Activated CD4-positive, alpha-beta memory T cell treated with anti-CD3 and anti-CD28 coated beads, Interleukin-2, amount 10 ng/mL, durations not matched to agents 7 days and 5 days (primary cell): ENCODE measurements at regions of chr7 and their contacts with region 1.

Region 1: DNA sequence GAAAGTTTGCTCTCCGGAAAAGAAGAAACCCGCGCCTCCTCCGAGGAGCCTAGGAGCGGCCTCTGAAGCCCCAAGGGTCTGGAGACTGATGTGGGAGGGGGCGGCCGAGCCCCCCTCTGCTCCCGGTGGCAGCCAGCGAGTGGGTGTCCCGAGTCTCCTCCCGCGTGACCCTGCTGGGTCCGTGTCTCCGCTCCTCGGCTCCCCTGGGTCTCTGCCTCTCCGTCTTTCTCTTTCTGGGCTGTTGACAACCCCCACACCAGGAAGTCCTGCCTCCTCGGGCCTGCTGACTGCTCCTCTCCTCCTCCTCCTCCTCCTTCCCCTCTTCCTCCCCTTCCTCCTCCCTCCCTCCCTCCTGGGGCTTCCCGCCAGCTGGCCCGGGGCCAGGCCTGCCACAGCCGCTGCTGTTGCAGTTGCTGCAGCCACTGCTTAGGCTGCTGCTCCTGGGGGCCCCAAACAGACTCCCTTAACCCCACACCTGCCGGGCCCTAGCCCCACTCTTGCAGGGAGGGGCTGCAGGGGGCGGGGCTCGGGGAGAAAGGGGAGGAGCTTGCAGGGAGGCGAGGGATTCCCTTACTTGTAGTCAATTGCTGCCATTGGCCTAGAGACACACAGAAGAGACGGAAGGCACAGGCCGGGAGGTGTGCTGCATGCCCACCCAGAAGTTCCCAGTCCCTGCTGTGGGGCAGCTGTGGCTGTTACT is at the start of gene TSC22D4:
- DNase-seq: peak; percentile 91
- H3K4me3 Mint-ChIP-seq: peak within 1 kb of the TSS; percentile 99
- H3K27ac Mint-ChIP-seq: peak within 1 kb of the TSS; percentile 93
- H3K4me1 Mint-ChIP-seq: peaks cover 40% of the 10 kb centered on the region
- H3K27me3 Mint-ChIP-seq: no peaks in the 10 kb centered on the region
- total RNA-seq, gene TSC22D4: 133 to 136 TPM

Region 2: DNA sequence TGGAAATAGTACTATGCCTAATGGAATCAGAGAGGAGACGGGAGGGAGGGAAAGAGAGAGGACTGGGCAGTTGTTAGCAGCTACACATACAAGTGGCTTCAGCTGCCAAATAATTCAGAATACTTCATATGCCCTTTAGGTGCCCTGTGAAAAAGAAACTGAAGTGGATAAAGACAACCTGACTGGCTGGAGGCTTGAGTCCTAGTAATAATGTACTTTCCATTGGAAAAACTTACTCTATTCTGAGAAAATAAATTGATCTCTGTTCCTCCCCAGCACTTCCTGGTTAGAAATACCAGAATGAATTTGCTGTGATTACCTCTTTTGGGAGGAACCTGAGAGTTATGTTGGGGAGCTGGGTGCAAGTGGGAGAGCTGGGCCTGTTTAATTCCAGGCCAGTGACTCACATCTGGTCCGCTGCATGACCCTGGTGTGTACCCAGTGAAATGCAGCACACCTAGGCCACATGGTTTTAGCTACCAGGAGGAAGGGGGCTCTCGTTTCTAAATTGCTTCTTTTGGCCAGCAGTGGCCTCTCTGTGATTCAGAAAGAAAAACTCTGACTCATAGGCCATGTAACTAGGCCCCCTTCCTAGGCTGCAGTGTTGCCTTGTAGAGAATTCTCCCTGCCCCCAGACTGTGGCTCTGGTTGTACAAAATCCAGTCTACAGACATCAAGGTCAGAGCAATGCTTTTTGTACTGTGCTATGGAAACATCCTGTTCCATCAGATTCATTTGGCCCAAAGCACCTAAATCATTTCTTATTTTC is 66.4 kb after region 1 on chr7:
- CTCF ChIA-PET with region 1: interaction called, 8 read pairs
- POLR2A ChIA-PET with region 1: interaction called, 10 read pairs
- DNase-seq: peak; percentile 59
- H3K4me3 Mint-ChIP-seq: peak overlapping the region; percentile 97
- H3K27ac Mint-ChIP-seq: peak overlapping the region; percentile 96
- H3K4me1 Mint-ChIP-seq: peaks cover 96% of the 10 kb centered on the region
- H3K27me3 Mint-ChIP-seq: no peaks in the 10 kb centered on the region